ENCODE measurements at regions of chr5 and their contacts with region 1.

Region 1: GRCh38 chr5:146041180-146041789 is 64.1 kb downstream of the PLAC8L1 start:
- DNase-seq: no peak

Region 2: DNA sequence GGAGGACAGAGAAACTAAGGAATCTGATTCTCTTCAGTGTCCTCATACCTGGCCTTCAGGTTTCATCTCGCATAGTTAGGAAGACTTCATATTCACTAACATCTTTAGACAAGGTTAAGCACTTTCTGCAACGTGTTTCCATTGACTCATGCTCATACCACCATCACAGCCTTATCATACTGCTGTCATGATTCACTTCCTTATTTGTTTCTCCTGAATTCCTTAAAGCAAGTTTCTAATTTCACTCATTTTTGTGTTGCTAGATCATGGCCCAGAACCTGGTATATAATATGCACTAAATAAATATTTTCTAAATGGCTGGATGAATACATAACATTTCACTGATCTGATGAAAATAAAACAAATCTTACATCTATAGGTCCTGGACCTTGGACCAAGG is 679.0 kb before region 1 on chr5:
- intact Hi-C with region 1: no loop called
- DNase-seq: no peak

Region 3: DNA sequence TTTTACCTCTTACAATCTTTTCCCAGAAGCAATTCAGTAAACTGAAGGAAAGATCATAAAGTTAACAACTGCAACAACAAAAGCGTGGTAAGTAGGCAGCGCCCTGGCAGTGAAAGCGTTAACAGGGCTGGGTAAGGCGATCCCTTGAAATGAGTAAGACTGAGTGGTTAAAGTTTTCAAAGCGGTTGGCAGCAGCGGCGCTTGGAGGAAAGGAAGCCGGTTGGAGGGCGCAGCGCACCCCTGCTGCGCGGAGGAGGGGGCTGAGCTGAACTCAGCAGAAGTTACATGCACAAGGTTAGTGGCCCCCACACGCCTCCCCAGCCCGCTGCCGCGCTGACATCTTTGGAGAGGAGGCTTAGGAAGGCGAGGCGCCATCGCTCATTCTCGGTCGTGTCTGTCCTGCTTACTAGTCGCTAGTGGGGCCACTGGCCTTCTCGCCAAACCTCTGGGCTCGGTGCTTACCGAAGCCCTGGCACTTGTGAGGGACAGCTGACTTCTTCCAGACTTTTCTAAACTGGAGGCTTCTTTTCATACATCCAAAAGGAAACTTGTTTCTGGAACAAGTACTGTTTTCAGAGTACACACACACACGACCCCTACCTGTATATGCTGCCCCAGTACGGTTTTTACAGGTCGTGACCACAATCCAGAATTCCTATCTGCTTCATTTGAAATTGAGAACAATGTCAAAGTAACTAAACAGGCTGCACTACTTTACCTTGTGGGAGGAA is 104.7 kb before region 1 on chr5 and contains the start of gene SH3RF2:
- intact Hi-C with region 1: loop called (anchors 5 kb)
- DNase-seq: no peak
- total RNA-seq, gene SH3RF2: 231 TPM

Region 4: GRCh38 chr5:145981589-145982491 is 59.4 kb before region 1 on chr5:
- intact Hi-C with region 1: loop called (anchors 5 kb)
- DNase-seq: no peak

Region 5: GRCh38 chr5:145996135-145996534 is 45.1 kb before region 1 on chr5:
- intact Hi-C with region 1: no loop called
- DNase-seq: no peak

Region 6: GRCh38 chr5:146079695-146080361 is 38.5 kb after region 1 on chr5:
- intact Hi-C with region 1: no loop called
- DNase-seq: no peak